Heart left ventricle (tissue), 16 donors: ENCODE measurements at regions of chr10 and their contacts with region 1.

Region 1: DNA sequence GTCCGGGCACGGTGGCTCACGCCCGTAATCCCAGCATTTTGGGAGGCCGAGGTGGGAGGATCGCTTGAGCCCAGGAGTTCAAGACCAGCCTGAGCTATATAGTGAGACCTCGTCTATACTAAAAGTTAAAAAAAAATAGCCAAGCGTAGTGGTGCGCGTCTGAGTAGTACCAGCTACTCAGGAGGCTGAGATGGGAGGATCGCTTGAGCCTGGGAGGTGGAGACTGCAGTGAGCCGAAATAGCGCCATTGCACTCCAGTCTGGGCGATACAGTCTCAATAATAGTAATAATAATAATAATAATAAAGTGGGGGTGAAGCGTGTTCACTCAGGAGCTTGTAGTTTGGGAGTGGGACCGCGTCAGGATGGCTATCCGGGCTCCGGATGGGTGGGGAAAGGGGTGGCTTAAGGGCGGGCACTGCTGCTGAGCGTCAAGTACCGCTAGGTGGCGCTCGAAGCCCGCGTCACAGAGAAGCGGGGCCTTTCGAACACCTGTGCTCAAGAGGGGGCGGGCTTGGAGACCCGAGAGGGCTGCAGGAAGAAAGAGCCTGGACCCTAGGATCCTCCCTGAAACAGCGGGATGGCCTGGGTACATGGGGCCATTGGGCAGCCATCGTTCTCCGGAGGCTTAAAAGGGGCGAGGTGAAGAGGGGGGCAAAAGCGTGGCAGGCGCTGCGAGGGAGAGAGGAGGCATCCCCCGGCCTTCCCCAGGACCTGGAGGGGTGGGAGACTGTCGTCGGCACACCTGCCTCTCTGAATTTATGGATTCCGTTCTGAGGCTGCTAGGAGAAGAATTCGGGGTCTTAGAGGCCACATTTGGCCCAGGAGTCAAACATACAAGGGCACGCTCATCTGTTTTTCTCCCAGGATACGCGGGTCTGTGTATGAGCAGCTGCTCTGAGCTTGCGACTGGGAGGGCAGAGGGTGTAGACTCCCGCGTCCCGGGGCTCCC is 14.5 kb downstream of the LBX1 start:
- DNase-seq: peak; percentile 45 to 77 (median 65)
- ATAC-seq: peak; percentile 69 to 85 (median 78)
- H3K4me3 ChIP-seq: peak overlapping the region in 1 of 12 donors; percentile 3
- H3K27ac ChIP-seq: no peak overlapping the region
- H3K4me1 ChIP-seq: peaks cover 0 to 47% (median 29%) of the 10 kb centered on the region in 12 donors
- H3K27me3 ChIP-seq: peaks cover 51 to 100% (median 92%) of the 10 kb centered on the region in 9 donors
- CTCF ChIP-seq: peak; percentile 82 to 93 (median 87)
- POLR2A ChIP-seq: no peak

Region 2: DNA sequence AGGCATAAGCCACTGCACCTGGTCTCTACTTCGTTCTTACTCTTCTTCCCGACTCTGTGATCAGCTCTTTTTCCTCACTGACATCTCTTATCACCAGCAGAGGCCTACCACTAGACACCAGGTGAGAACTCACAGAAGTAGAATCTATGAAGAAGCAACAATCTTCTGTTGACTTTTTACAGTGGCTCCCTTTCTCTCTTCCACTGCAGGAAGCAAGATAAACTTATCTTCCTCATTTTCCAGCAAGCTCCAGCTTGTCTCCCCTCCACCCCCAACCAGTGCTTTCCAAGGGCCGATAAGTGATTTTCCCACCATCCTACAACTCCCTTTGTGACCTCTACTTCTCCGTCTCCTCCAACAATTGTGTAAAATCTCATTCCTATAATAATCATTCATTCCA is 38.1 kb before region 1 on chr10:
- intact Hi-C with region 1: no loop called
- DNase-seq: no peak
- ATAC-seq: no peak
- H3K4me3 ChIP-seq: no peak overlapping the region
- H3K27ac ChIP-seq: no peak overlapping the region
- H3K4me1 ChIP-seq: no peaks in the 10 kb centered on the region
- H3K27me3 ChIP-seq: peaks cover 0 to 45% (median 6%) of the 10 kb centered on the region in 9 donors
- CTCF ChIP-seq: no peak
- POLR2A ChIP-seq: no peak

Region 3: DNA sequence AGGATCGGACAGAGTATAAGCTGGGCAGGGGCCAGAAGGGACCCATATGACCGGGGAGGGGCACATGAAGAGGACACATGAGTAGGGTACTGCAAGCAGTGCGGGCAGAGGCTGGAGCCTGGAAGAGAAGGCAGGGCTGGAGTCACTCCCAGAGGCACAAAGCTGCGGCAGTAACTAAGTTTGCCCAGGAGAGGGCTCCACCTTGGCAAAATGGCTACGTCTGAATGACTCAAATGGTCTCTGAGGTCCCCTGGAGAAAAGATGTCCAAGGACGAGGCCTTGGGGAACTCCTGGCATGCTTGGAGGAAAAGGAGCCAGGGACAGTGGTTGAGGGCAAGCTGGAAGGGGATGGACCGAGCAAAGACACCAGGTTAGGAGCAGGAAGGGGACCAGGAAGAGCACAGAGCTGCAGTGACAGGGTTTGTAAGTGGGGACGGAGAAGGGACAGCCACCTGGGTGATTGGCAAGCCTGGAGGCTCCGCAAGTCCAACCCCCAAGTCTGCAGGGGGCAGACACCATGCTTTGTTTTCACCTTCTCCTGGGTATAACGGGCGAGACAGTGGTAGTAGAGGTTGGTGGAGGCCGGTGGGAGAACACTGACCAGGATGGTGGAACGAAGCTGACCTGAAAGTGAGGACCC is 57.6 kb after region 1 on chr10:
- intact Hi-C with region 1: no loop called
- DNase-seq: peak in 4 of 5 donors; percentile 29 to 50 (median 48)
- ATAC-seq: peak; percentile 64 to 87 (median 80)
- H3K4me3 ChIP-seq: no peak overlapping the region
- H3K27ac ChIP-seq: no peak overlapping the region
- H3K4me1 ChIP-seq: no peaks in the 10 kb centered on the region
- H3K27me3 ChIP-seq: peaks cover 0 to 25% (median 4%) of the 10 kb centered on the region in 9 donors
- CTCF ChIP-seq: peak; percentile 61 to 78 (median 72)
- POLR2A ChIP-seq: no peak

Region 4: GRCh38 chr10:101284116-101284743 is 69.5 kb after region 1 on chr10:
- intact Hi-C with region 1: loop called in 1 of 10 experiments (anchors 5 kb)
- DNase-seq: no peak
- ATAC-seq: peak in 1 of 4 donors; percentile 35
- H3K4me3 ChIP-seq: peak overlapping the region in 9 of 12 donors; percentile 11 to 38 (median 22)
- H3K27ac ChIP-seq: no peak overlapping the region
- H3K4me1 ChIP-seq: peaks cover 0 to 11% (median 4%) of the 10 kb centered on the region in 12 donors
- H3K27me3 ChIP-seq: peaks cover 15 to 72% (median 47%) of the 10 kb centered on the region in 9 donors
- CTCF ChIP-seq: no peak
- POLR2A ChIP-seq: no peak

Region 5: DNA sequence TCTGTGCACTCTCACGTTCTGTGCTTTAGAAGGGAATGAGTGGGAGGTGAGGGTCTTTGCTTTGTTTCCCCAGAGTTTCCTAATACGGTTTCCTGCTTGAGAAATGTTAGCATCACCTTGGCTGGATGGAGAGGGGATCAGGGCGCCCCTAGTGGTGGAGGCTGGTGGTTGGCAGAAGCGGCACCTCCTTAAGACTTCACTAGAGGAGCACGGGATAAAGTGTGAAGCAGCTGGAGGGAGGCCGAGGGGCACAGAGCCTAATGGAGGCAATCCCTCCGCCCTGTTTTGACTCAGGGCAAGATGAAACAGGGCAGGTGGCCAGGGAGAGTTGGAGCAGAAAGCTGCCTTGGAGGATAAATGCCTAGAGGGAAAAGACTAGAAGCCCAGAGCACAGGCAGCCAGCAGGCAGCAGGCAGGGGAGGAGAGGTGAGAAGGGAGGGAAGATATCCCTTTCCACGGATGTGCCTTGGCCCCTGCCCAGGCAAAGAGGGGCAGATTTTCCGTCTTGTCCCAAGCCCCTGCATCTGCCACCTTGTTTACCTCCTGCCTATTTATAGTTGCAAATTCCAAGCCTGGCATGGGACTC is 83.3 kb after region 1 on chr10:
- intact Hi-C with region 1: loop called in 7 of 10 experiments (anchors 5 to 10 kb)
- DNase-seq: peak in 4 of 5 donors; percentile 25 to 75 (median 33)
- ATAC-seq: peak in 3 of 4 donors; percentile 25 to 48 (median 37)
- H3K4me3 ChIP-seq: no peak overlapping the region
- H3K27ac ChIP-seq: no peak overlapping the region
- H3K4me1 ChIP-seq: peaks cover 0 to 11% (median 0%) of the 10 kb centered on the region in 12 donors
- H3K27me3 ChIP-seq: peaks cover 0 to 38% (median 3%) of the 10 kb centered on the region in 9 donors
- CTCF ChIP-seq: peak; percentile 66 to 89 (median 76)
- POLR2A ChIP-seq: no peak

Region 6: DNA sequence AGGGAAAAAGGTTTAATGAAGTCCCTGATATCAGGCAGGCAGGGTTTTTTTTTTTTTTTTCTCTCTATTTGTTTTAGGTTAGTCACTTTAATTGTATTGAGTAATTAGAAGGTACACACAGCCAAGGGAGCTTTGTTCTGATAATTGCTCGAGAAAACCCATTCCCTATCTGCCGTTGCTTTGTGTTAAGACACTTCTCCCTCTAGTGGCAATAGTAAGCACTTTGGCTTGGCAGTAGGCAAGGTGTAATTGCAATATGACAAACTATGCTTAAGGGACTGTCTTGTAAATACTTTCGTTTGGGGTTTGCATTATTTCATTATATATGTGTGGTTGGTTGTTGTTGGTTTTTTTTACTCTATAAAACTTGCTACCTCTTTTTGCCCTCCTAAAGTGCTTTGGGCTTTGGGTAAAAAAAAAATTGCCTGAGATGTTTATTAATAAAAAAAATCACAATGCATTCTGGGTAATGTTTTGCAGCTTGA is 252.6 kb after region 1 on chr10:
- intact Hi-C with region 1: loop called in 9 of 10 experiments (anchors 1 to 10 kb)
- DNase-seq: peak in 2 of 5 donors; percentile 23 to 27
- ATAC-seq: peak; percentile 56 to 88 (median 82)
- H3K4me3 ChIP-seq: no peak overlapping the region
- H3K27ac ChIP-seq: no peak overlapping the region
- H3K4me1 ChIP-seq: peaks cover 0 to 34% (median 10%) of the 10 kb centered on the region in 12 donors
- H3K27me3 ChIP-seq: no peaks in the 10 kb centered on the region
- CTCF ChIP-seq: peak; percentile 66 to 92 (median 76)
- POLR2A ChIP-seq: no peak

Region 7: DNA sequence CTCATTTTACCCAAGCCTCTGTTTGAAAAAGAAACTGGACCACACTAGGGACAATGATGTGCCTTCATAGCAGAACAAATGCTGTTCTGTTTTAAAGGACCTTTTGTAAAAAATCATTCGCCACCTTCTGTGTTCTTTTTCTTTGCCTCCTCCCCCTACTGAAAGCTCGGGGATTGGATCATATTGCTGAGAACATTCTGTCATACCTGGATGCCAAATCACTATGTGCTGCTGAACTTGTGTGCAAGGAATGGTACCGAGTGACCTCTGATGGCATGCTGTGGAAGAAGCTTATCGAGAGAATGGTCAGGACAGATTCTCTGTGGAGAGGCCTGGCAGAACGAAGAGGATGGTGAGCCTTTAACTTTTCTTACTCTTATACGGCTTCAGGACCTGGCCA is 311.1 kb after region 1 on chr10:
- intact Hi-C with region 1: no loop called
- DNase-seq: no peak
- ATAC-seq: peak in 3 of 4 donors; percentile 68 to 82 (median 79)
- H3K4me3 ChIP-seq: no peak overlapping the region
- H3K27ac ChIP-seq: no peak overlapping the region
- H3K4me1 ChIP-seq: peaks cover 0 to 18% (median 0%) of the 10 kb centered on the region in 12 donors
- H3K27me3 ChIP-seq: no peaks in the 10 kb centered on the region
- CTCF ChIP-seq: no peak
- POLR2A ChIP-seq: no peak

Region 8: GRCh38 chr10:101569838-101570766 is 355.4 kb after region 1 on chr10:
- intact Hi-C with region 1: loop called in 9 of 10 experiments (anchors 1 to 5 kb)
- DNase-seq: peak; percentile 71 to 91 (median 85)
- ATAC-seq: peak; percentile 21 to 93 (median 81)
- H3K4me3 ChIP-seq: peak overlapping the region; percentile 17 to 70 (median 54)
- H3K27ac ChIP-seq: peak overlapping the region in 2 of 12 donors; percentile 15 to 23
- H3K4me1 ChIP-seq: peaks cover 0 to 28% (median 16%) of the 10 kb centered on the region in 12 donors
- H3K27me3 ChIP-seq: peaks cover 10 to 49% (median 39%) of the 10 kb centered on the region in 9 donors
- CTCF ChIP-seq: peak; percentile 78 to 98 (median 90)
- POLR2A ChIP-seq: no peak

Region 9: GRCh38 chr10:101716851-101717659 is 502.3 kb after region 1 on chr10:
- intact Hi-C with region 1: no loop called
- DNase-seq: no peak
- ATAC-seq: no peak
- H3K4me3 ChIP-seq: no peak overlapping the region
- H3K27ac ChIP-seq: no peak overlapping the region
- H3K4me1 ChIP-seq: no peaks in the 10 kb centered on the region
- H3K27me3 ChIP-seq: peaks cover 0 to 15% (median 0%) of the 10 kb centered on the region in 9 donors
- CTCF ChIP-seq: no peak
- POLR2A ChIP-seq: no peak